Activated T-helper 1 cell treated with anti-CD3 and anti-CD28 coated beads, Interleukin-12 subunit alpha, Interleukin-12 subunit beta, Interleukin-2, Interleukin-4 antibody, amounts not matched to agents 30 ng/mL and 10 ng/mL and 1 ng/mL, durations not matched to agents 14 hours and 24 hours and 36 hours (primary cell): ENCODE measurements at regions of chr17 and their contacts with region 1.

Region 1: DNA sequence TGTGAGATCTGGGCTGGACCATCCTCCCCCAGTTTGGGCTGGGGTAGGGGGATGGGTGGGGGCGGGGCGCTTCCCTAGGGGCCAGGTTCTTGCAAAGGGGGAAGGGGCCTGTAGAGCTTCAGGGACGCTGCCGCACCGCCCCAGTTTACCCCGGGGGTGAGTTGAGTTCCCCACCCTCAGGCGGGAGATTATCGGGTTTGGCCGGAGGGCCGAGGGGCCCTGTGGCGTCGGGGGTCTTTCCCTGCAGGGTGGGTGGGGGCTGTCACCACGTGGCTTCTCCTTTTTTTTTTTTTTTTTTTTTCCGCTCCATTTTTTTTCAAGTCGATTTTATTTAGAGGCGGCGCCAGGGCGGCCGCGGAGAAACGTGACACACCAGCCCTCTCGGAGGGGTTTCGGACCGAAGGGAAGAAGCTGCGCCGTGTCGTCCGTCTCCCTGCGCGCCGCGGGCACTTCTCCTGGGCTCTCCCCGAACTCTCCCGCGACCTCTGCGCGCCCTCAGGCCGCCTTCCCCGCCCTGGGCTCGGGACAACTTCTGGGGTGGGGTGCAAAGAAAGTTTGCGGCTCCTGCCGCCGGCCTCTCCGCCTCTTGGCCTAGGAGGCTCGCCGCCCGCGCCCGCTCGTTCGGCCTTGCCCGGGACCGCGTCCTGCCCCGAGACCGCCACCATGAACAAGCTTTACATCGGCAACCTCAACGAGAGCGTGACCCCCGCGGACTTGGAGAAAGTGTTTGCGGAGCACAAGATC is at the start of gene IGF2BP1:
- DNase-seq: no peak
- H3K4me3 Mint-ChIP-seq: peak within 1 kb of the TSS; percentile 67
- H3K27ac Mint-ChIP-seq: peak within 1 kb of the TSS; percentile 61
- H3K4me1 Mint-ChIP-seq: peaks cover 24% of the 10 kb centered on the region
- H3K27me3 Mint-ChIP-seq: peaks cover 82% of the 10 kb centered on the region
- total RNA-seq, gene IGF2BP1: not detected in 2 replicates

Region 2: DNA sequence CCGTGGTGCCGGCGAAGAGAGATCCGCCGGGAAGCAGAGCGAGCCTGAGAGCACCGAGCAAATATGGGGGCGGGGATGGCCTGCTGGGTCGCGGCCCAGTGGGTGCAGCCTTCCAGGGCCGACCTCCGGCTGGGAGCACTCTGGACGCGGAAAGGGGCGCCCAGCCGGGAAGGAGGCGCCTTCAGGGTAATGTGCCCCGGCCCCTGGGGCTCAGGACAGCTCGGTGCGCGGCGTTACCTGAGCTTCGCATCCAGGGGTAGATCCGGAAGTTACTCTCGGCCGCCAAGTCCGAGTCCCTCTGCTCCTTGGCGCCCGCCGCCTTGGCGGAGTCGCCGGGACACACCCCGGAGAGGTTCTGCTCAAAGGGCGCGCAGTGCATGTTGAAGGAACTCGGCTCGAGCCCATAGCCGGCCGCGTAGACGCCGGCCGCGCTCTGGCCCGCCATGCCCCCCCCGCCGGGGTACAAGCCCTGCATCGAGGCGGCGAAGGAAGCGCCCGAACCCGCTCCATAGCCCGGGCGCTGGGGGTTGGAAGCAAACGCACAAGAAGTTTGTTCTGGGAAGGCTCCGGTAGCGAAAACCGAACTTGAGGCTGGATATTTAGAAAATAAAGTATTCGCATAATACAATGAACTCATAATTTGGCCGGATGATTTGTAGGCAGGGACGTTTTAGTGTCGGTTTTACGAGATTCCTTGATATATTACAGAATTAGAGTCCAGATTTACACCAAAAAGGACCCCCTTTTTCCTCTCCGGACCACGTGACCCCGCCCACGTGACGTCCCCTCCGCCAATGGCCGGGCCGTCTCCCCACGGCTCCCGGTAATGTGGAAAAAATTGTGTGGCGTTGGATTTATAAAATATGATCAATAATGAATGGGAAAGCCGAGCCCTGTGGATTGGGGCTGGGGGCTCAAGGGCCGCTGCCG is 386.7 kb before region 1 on chr17 and contains the start of gene HOXB7:
- intact Hi-C with region 1: loop called (anchors 5 kb)
- DNase-seq: peak; percentile 49
- H3K4me3 Mint-ChIP-seq: peak within 1 kb of the TSS; percentile 86
- H3K27ac Mint-ChIP-seq: peak within 1 kb of the TSS; percentile 32
- H3K4me1 Mint-ChIP-seq: peaks cover 34% of the 10 kb centered on the region
- H3K27me3 Mint-ChIP-seq: peaks cover 76% of the 10 kb centered on the region
- total RNA-seq, gene HOXB7: 0.49 and 0.51 TPM in 2 replicates

Region 3: DNA sequence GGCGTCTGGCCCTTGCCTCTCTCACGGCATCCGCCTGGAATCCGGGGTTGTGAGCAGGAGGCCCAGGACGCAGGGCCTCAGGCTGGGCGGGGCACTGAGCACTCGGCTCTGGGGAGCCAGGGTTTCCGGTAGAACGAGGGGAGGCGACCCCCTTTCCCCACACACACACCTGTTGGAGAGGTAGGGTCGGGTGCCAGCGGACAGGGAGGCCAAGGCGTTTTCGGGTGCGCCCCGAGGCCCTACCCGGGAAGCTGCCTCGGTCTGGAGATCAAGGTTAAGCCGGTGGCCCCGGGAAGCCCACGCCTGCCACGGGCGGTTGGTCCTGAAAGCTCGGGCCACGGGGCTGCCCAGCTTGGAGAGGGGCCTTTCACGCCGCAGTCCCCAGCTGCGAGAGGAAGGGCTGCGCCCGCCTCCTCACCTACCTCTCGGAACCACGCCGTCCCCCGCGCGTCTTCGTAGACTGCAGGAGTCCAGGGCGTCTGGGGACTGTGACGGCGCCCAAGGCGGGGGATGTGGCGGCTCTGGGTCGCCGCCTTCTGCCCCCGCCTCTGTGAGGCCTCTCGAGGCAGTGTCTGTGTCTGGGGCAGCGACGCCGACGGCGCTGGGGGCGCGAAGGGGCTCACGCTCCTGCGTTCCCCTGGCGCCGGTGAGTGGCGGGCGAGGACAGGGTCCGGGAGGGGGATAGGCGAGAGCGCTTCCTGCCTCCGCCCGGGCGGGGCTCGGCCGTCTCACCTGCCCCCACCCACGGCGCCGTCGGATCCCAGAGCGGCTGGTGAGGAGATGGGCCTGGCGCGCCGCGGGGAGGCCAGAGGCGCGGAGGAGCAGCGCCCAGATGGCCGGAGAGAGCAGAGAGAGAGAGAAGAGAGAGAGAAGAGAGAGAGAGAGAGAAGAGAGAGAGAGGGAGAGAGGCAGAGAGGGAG is 350.8 kb before region 1 on chr17:
- intact Hi-C with region 1: loop called (anchors 10 kb)
- DNase-seq: no peak
- H3K4me3 Mint-ChIP-seq: peak overlapping the region; percentile 64
- H3K27ac Mint-ChIP-seq: no peak overlapping the region
- H3K4me1 Mint-ChIP-seq: peaks cover 11% of the 10 kb centered on the region
- H3K27me3 Mint-ChIP-seq: peaks cover 77% of the 10 kb centered on the region

Region 4: GRCh38 chr17:48718761-48719641 is 278.3 kb before region 1 on chr17:
- intact Hi-C with region 1: loop called (anchors 1 kb)
- DNase-seq: no peak
- H3K4me3 Mint-ChIP-seq: no peak overlapping the region
- H3K27ac Mint-ChIP-seq: peak overlapping the region; percentile 77
- H3K4me1 Mint-ChIP-seq: peaks cover 8% of the 10 kb centered on the region
- H3K27me3 Mint-ChIP-seq: peaks cover 90% of the 10 kb centered on the region

Region 5: DNA sequence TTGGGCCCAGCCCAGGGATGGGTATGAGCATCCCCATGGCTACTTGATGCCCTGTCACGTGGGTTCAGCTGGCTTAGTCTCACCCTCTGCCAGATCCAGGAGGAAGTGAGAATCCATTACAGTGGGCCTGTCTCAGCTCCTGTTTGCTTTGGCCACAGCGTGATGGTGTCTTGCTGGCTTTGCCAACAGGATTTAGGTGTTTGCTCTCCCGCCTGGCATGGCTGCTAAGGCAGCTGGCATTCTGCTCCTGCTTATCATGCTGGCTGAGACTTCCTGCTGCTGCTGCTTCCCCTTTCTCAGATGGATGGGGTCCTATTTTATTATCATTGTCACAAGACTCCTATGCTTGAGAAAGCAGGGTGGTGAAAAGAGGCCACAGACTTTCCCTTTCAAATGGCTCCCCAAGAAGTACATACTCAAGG is 240.4 kb before region 1 on chr17:
- intact Hi-C with region 1: loop called (anchors 2 kb)
- DNase-seq: no peak
- H3K4me3 Mint-ChIP-seq: no peak overlapping the region
- H3K27ac Mint-ChIP-seq: no peak overlapping the region
- H3K4me1 Mint-ChIP-seq: peaks cover 10% of the 10 kb centered on the region
- H3K27me3 Mint-ChIP-seq: peaks cover 78% of the 10 kb centered on the region

Region 6: GRCh38 chr17:48894886-48895285 is 102.4 kb before region 1 on chr17:
- intact Hi-C with region 1: no loop called
- DNase-seq: no peak
- H3K4me3 Mint-ChIP-seq: no peak overlapping the region
- H3K27ac Mint-ChIP-seq: no peak overlapping the region
- H3K4me1 Mint-ChIP-seq: peaks cover 31% of the 10 kb centered on the region
- H3K27me3 Mint-ChIP-seq: no peaks in the 10 kb centered on the region

Region 7: DNA sequence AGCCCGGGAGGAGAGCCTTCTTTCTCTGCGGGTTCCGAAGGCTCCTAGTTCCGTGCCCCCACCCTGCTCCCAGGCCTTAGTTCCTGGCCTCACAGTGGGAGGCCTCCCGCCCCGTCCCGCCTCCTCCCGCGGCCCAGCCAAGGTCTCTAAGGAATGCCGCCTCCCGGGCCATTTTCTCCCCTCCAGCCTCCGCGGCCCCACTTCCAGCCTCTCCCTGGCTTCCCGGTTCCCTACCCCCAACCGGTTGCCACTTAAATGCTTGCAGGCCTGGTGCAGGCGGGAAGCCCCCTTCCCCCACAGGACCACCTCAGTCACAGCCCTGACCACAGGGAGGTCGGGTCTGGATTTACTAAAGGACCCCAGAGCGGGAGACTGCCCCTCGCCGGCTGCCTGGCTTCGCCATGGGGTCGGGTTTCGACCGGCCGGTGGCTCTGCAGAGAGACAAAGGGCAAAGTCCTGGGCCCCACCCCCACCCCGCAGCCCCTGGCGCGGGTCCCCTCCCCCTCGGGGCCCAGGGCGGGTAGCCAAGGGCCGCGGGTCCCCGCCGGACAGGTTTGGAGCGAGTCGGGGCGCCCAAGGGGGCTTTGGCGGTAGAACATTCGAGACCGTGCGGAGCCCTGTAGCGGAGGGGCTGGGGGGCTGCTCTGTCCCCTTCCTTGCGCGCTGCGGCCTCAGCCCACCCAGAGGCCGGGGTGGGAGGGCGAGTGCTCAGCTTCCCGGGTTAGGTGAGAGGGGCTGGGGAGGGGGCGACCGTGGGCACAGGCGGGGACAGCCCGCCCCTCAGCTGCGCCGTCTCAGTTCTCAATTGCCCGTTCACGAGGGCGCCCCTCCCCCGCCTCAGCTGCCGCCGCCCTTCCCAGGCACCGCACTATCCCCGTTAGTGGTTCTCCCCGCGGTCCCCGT is 16.3 kb after region 1 on chr17:
- intact Hi-C with region 1: no loop called
- DNase-seq: no peak
- H3K4me3 Mint-ChIP-seq: no peak overlapping the region
- H3K27ac Mint-ChIP-seq: no peak overlapping the region
- H3K4me1 Mint-ChIP-seq: no peaks in the 10 kb centered on the region
- H3K27me3 Mint-ChIP-seq: peaks cover 41% of the 10 kb centered on the region

Region 8: GRCh38 chr17:49496183-49496866 is 499.1 kb after region 1 on chr17:
- intact Hi-C with region 1: loop called (anchors 5 kb)
- DNase-seq: peak; percentile 77
- H3K4me3 Mint-ChIP-seq: peak overlapping the region; percentile 66
- H3K27ac Mint-ChIP-seq: no peak overlapping the region
- H3K4me1 Mint-ChIP-seq: no peaks in the 10 kb centered on the region
- H3K27me3 Mint-ChIP-seq: peaks cover 75% of the 10 kb centered on the region

Region 9: DNA sequence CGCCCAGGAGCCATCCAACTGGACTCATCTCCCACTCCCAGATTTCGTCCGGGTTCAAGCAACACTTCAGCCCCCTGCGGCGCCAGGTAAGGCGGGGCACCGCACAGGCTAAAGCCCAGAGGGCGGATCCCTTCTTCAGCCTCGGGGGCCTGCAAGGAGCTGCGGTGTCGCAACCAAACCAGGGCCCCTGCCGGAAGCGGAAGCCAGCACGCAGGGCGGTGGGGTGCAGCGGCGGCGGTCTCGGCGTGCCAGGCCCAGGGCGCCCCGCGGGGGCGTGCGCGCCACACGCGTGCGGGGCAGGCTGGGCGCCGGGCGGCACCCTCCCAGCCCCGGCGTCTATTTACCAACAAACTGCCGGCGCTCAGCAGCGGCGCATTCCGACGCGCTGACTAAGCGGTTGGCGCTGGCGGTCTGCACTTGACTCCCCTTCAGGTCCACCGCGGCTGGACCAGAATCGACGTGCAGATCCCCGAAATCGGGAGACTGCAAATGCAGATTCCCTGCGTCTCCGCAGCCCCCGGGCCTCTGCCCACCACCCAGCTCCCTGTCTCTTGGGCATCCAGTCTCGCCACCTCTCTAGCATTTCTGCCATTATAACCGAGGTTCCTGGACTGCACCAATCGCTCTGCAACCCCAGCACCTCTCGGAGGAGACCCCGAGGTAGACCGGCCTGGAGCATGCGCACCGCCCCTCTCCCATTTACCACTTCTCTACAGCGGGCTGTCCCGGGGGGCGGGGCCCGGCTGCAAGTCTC is 971.3 kb after region 1 on chr17:
- intact Hi-C with region 1: loop called (anchors 10 kb)
- DNase-seq: peak; percentile 47
- H3K4me3 Mint-ChIP-seq: peak overlapping the region; percentile 85
- H3K27ac Mint-ChIP-seq: peak overlapping the region; percentile 63
- H3K4me1 Mint-ChIP-seq: peaks cover 21% of the 10 kb centered on the region
- H3K27me3 Mint-ChIP-seq: peaks cover 90% of the 10 kb centered on the region